Common myeloid progenitor, CD34-positive (primary cell): ENCODE measurements at regions of chr19 and their contacts with region 1.

Region 1: GRCh38 chr19:58511353-58512208 is at the start of gene SLC27A5:
- DNase-seq: no peak
- H3K4me3 ChIP-seq: no peak within 1 kb of the TSS
- H3K27ac ChIP-seq: no peak within 1 kb of the TSS
- H3K4me1 ChIP-seq: peaks cover 0 to 18% (median 15%) of the 10 kb centered on the region in 4 experiments
- H3K27me3 ChIP-seq: no peaks in the 10 kb centered on the region

Region 2: DNA sequence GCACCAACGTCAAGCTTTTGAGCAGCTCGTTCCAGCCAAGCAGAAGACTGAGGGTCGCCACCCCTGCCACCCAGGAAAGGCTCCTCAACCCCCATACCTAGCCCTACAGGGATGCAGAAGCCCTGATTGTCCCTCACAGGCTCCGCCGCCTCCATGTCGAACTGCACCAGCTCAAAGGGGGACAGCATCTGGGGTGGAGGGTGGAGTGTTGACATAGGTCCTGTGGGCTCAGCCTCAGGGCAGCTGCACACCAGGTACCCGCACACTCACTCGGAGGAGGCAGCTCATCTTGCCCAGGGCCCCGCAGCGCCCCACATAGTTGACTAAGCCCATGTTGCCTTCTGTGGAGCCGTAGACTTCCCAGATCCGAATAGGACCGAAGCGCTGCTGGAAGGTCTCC is 11.3 kb before region 1 on chr19:
- CTCF ChIA-PET with region 1: interaction called, 10 read pairs
- POLR2A ChIA-PET with region 1: interaction called, 9 read pairs
- DNase-seq: no peak
- H3K4me3 ChIP-seq: peak overlapping the region in 2 of 7 experiments; percentile 69 to 84
- H3K27ac ChIP-seq: no peak overlapping the region
- H3K4me1 ChIP-seq: peaks cover 3 to 24% (median 22%) of the 10 kb centered on the region in 4 experiments
- H3K27me3 ChIP-seq: no peaks in the 10 kb centered on the region